ENCODE measurements at regions of chr6 and their contacts with region 1.

Region 1: GRCh38 chr6:53171605-53172446 is 23.2 kb upstream of the GCM1 start:
- DNase-seq: peak; percentile 85
- CTCF ChIP-seq: peak; percentile 100

Region 2: GRCh38 chr6:53410508-53411258 is 238.9 kb after region 1 on chr6:
- CTCF ChIA-PET with region 1: interaction called, 60 read pairs
- POLR2A ChIA-PET with region 1: interaction called, 3 read pairs
- DNase-seq: peak; percentile 58
- CTCF ChIP-seq: peak; percentile 86

Region 3: DNA sequence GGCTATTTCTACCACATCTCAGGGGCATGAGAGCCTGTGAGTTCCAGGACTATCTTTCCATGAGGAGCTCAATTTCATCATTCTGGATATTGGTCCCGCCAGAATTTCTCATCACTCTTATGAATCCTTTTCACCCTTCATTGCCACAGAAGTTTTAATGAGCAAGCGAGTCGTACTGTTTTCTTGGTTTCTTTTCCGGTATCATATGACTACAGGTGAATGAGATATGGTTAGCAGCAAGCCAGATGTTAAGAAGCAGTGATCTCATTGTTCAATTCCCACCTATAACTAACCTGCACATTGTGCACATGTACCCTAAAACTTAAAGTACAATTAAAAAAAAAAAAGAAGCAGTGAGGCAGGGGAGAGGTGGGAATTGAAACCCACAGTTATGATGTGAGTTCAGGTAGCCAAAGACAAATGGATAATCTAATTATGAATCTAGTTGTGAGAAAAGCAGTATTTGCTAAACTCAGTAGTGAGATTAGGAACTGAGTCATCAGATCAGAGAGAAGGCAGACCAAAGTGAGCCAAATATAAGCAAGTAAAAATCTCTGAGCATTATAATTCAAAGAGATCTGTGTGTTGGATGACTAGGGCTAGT is 254.9 kb after region 1 on chr6:
- CTCF ChIA-PET with region 1: interaction called, 10 read pairs
- POLR2A ChIA-PET with region 1: no interaction called
- DNase-seq: peak; percentile 40
- CTCF ChIP-seq: no peak

Region 4: DNA sequence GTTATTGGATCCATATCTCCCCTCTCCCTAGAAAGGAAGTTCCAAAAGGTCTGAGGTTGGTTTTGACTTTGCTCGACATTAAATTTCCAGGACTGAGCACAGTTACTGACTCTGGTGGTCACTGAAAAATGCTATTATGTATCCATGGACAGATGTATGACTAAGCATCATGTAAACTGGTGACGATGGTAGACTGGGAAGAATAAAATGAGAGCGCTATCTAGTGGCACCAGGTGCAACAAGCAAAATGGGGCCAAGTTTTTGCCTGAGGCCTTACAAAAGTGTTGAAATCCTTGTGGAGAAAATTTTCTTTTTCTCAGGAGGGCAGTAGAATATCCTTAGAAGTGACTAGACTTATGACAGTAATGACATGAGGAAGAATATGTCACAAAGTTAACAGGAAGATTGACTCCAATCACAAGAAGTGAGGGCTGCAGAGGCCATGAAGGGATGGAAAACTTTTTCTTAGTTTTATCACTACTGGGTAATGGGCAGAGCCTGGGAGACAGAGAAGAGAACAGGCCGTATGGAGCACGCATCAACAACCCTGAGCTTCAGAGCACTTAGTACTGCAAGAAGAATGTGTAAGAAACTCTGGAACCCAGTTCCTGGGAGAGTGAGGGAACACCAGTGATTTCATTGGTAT is 265.9 kb after region 1 on chr6:
- CTCF ChIA-PET with region 1: interaction called, 60 read pairs
- POLR2A ChIA-PET with region 1: no interaction called
- DNase-seq: peak; percentile 37
- CTCF ChIP-seq: peak; percentile 56

Region 5: GRCh38 chr6:53484476-53485280 is 312.9 kb after region 1 on chr6:
- CTCF ChIA-PET with region 1: interaction called, 161 read pairs
- POLR2A ChIA-PET with region 1: no interaction called
- DNase-seq: peak; percentile 22
- CTCF ChIP-seq: peak; percentile 87

Measured in GM10248 (cell line).